Vagina (tissue), 2 donors: ENCODE measurements at regions of chr1 and their contacts with region 1.

Region 1: DNA sequence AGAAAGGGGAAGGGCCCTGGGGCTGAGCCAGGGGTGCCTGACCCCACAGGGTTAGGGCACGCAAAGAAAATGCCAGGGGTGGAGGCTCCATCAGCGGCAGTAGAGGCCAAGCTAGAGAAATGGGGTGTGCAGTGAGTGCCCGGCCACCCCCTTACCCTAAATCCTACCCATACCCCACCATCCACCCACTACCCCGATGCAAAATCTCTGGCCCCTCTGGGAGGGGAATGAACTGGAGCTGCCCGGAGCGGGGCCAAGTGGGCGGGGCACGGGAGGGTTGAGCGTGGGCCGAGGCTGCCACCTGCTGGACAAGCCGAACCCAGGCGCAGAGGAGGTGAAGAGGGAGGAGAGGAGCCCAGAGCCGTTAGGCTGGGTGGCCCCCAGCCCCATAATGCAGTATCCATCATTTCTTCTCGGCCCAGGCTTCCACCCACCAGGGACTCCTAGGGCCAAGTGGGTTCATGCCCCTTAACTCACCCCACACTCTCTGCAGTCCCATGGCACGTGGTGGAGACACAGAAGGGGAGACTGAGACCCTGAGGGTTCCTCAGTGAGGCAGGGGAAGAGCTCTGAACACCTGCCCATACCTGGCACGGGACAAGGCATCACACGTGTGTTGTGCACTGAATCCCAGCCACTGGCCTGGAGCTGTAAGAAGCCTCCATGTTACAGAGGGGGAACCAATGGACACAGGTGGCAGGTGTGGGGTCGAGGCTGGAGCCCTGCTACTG is 1.4 kb upstream of the C1QC start:
- DNase-seq: no peak
- H3K4me3 ChIP-seq: peak overlapping the region in 1 of 2 donors; percentile 18
- H3K27ac ChIP-seq: no peak overlapping the region
- H3K4me1 ChIP-seq: no peaks in the 10 kb centered on the region
- H3K27me3 ChIP-seq: no peaks in the 10 kb centered on the region
- CTCF ChIP-seq: peak; percentile 78 to 90 (median 79)
- POLR2A ChIP-seq: no peak

Region 2: DNA sequence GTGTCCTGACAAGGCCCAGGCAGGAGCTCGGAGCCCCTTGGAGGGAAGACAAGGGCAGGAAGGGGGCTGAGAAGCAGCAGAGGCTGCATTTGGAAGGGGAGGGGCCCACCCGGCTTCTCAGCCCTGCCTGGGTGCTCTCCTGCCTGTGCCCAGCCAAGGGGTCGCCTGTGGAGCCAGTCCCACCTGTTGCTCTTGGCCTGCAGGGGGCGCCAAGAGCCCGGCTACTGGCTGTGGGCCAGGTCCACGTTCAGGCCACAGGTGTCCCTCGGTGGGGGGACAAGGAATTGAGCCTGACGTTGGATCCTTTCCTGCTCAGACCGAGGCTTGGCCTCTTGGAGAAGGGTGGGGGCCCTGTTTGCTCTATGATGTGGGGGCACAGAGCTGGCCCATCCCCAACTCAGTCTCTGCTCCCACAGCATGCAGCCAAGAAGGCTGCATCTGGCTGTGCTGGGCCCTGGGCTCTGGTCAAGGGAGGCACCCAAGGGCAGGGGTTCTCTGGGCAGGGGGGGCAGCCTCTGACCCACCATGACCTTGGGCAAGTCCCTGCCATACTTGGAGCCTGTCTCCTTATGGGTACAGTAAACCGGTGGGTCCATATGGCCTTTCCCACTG is 510.1 kb before region 1 on chr1:
- intact Hi-C with region 1: loop called (anchors 10 kb)
- DNase-seq: no peak
- H3K4me3 ChIP-seq: no peak overlapping the region
- H3K27ac ChIP-seq: no peak overlapping the region
- H3K4me1 ChIP-seq: peaks cover 29% of the 10 kb centered on the region
- H3K27me3 ChIP-seq: no peaks in the 10 kb centered on the region
- CTCF ChIP-seq: peak; percentile 27 to 60 (median 52)
- POLR2A ChIP-seq: no peak

Region 3: GRCh38 chr1:22416555-22417454 is 225.3 kb before region 1 on chr1:
- intact Hi-C with region 1: loop called (anchors 5 kb)
- DNase-seq: no peak
- H3K4me3 ChIP-seq: no peak overlapping the region
- H3K27ac ChIP-seq: no peak overlapping the region
- H3K4me1 ChIP-seq: peaks cover 5% of the 10 kb centered on the region
- H3K27me3 ChIP-seq: no peaks in the 10 kb centered on the region
- CTCF ChIP-seq: peak; percentile 18 to 49 (median 41)
- POLR2A ChIP-seq: no peak

Region 4: DNA sequence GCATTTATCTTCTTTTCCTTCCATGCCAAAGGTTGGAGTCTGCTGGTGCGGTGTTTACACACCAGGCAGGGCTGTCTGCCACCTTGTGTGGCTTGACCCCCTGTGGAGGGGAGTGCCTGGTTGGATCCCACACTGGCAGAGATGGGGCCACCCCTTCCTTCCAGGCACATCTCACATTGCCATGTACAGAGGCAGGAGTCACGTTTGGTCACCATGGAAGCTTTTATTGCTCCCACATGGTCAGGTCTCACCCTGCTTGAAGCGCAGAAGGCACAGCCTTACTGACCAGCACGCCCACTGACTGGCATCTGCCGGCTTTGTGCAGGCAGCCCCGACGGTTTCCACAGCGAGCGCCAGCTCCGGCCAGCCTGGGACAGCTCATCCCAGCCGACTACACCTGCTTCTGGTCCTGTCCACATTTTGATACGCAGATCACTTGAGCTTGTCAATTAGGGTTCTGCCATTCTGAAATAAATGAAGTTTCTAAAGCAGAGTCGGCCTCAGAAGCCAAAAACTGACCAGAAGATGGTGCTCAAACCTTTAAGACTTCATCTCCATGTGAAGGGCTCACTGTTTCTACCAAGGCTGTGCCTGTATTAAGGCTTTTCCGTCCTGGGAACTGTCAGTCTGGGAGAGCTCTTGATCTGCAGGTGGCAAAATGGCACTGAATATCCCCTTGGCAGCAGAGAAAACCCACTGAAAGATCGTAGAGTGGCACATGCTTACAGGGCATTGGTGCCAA is 114.3 kb before region 1 on chr1:
- intact Hi-C with region 1: no loop called
- DNase-seq: no peak
- H3K4me3 ChIP-seq: no peak overlapping the region
- H3K27ac ChIP-seq: no peak overlapping the region
- H3K4me1 ChIP-seq: peaks cover 15% of the 10 kb centered on the region
- H3K27me3 ChIP-seq: no peaks in the 10 kb centered on the region
- CTCF ChIP-seq: no peak
- POLR2A ChIP-seq: no peak

Region 5: DNA sequence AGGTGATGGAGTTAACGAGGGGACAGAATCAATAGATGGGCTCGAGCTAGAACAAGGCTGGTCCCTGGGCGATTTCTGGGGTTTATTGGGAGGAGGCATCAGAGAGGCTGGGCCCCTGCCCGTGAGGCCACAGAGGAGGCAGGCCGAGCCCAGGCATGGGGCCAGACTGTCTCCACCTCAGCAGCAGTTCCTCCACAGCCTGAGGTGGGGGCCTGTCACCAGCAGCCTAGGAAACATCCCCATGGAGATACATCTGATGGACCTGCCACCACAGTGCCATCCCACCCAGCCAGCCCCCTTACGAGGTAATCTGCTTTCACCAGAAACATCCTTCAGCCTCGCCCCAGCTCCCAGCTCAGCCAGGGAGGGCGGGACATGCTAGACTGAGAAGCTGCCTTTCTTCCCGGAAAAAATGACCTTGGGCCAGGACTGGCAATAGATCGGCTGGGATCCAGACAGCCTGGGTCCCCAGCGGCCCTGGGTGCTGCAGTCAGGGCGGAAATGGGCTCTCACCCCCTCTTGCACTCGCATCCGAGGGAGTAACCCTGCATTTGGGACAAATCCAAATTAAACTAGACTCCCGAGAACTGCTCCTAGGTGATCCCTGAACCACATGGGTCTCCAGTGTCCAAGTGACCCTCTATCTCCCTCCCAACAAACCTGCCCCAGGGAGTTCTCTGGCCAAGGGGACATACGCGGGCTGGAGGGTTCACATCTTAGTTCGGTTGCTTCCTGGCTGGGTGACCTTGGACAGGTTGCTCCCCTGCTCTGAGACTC is 88.8 kb before region 1 on chr1:
- intact Hi-C with region 1: no loop called
- DNase-seq: no peak
- H3K4me3 ChIP-seq: no peak overlapping the region
- H3K27ac ChIP-seq: no peak overlapping the region
- H3K4me1 ChIP-seq: no peaks in the 10 kb centered on the region
- H3K27me3 ChIP-seq: no peaks in the 10 kb centered on the region
- CTCF ChIP-seq: no peak
- POLR2A ChIP-seq: no peak